CD4-positive, alpha-beta memory T cell (primary cell): ENCODE measurements at regions of chr10 and their contacts with region 1.

Region 1: DNA sequence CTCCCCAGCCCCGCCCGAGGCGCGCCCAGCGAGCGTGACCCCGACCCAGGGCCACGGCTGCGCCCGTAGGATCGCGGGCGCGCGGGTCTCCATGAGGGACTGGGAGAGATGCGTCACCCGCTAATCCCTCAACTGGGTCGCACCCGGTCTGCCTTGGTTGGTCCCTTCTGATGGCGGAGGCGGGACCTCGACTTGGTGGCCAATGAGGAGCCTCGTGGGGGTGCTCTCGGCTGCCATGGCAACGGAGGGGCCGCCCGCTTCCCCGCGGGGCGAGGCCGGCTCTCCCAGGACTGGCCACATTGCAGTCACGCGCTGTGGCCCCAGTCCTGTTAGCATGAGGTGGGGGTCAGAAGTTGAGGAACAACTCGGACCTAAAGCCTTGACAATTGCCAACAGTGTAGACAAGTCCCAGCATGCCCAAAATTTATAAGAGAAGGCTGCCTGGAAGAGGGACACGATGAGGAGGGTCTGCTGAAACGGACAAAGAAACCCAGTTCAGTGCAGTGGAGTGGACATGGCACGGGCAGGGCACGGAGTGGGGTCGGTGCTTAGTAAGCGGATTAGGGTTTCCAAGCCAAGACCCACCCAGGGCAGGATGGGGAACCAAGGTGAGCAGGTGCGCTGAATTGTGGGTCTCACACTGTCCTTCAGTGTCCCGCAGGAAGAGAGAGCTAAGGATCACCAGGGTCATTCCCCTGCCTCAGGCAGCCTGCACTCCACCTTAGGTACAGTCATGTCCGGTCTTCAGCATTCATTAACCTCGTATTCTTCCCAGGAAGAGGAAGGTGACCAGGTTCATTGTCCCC is 24.4 kb downstream of the DDIT4 start:
- DNase-seq: peak; percentile 89 to 95 (median 91)
- H3K4me3 ChIP-seq: peak overlapping the region in 1 of 2 donors; percentile 71
- H3K4me3 Mint-ChIP-seq: peak overlapping the region; percentile 29 to 94 (median 86)
- H3K27ac ChIP-seq: peak overlapping the region; percentile 95
- H3K27ac Mint-ChIP-seq: peak overlapping the region; percentile 96 to 100 (median 100)
- H3K4me1 ChIP-seq: peaks cover 56% of the 10 kb centered on the region
- H3K4me1 Mint-ChIP-seq: peaks cover 26 to 67% (median 46%) of the 10 kb centered on the region in 4 donors
- H3K27me3 ChIP-seq: no peaks in the 10 kb centered on the region
- H3K27me3 Mint-ChIP-seq: no peaks in the 10 kb centered on the region

Region 2: GRCh38 chr10:72285972-72286521 is 12.1 kb before region 1 on chr10:
- CTCF ChIA-PET with region 1: interaction called, 4 read pairs
- POLR2A ChIA-PET with region 1: interaction called, 24 read pairs
- intact Hi-C with region 1: loop called (anchors 1 kb)
- DNase-seq: no peak
- H3K4me3 ChIP-seq: no peak overlapping the region
- H3K4me3 Mint-ChIP-seq: peak overlapping the region in 3 of 8 donors; percentile 2 to 73 (median 11)
- H3K27ac ChIP-seq: no peak overlapping the region
- H3K27ac Mint-ChIP-seq: peak overlapping the region; percentile 19 to 92 (median 87)
- H3K4me1 ChIP-seq: peaks cover 31% of the 10 kb centered on the region
- H3K4me1 Mint-ChIP-seq: peaks cover 26 to 46% (median 37%) of the 10 kb centered on the region in 4 donors
- H3K27me3 ChIP-seq: no peaks in the 10 kb centered on the region
- H3K27me3 Mint-ChIP-seq: no peaks in the 10 kb centered on the region

Region 3: DNA sequence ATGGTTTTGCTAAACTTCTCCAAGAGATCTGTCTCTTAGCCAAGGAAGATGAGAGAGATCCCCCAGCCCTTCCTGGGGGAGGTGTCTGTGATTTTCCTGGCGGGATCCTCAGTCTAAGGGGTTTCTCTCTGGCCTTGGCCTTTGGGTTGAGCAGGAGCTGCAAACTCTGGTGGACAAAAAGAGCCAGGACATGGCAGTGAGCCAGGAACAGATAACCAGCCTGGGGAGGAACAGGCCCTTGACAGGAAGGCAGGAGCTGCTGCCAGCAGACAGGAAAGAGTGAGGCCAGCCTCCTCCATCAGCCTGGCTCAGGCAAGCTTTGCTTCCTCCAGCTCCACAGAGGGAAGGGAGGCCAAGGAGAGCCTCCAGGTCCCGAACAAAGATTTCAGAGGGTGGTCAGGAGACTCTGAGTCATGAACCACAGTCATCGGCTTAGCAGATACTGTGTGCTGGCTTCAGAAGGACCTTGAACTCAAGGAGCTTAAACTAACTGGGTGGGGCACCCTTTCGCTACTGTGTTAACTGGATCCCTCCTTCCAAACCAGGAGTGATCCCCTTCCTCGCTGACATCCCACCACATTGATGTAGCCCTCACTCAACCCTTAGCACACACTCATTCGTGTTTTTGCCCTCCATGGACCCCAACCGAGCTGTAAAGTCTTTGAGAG is 10.3 kb after region 1 on chr10:
- CTCF ChIA-PET with region 1: interaction called, 5 read pairs
- POLR2A ChIA-PET with region 1: interaction called, 368 read pairs
- intact Hi-C with region 1: no loop called
- DNase-seq: no peak
- H3K4me3 ChIP-seq: no peak overlapping the region
- H3K4me3 Mint-ChIP-seq: peak overlapping the region in 3 of 8 donors; percentile 7 to 21 (median 12)
- H3K27ac ChIP-seq: no peak overlapping the region
- H3K27ac Mint-ChIP-seq: peak overlapping the region; percentile 58 to 88 (median 67)
- H3K4me1 ChIP-seq: peaks cover 65% of the 10 kb centered on the region
- H3K4me1 Mint-ChIP-seq: peaks cover 34 to 67% (median 51%) of the 10 kb centered on the region in 4 donors
- H3K27me3 ChIP-seq: no peaks in the 10 kb centered on the region
- H3K27me3 Mint-ChIP-seq: no peaks in the 10 kb centered on the region

Region 4: DNA sequence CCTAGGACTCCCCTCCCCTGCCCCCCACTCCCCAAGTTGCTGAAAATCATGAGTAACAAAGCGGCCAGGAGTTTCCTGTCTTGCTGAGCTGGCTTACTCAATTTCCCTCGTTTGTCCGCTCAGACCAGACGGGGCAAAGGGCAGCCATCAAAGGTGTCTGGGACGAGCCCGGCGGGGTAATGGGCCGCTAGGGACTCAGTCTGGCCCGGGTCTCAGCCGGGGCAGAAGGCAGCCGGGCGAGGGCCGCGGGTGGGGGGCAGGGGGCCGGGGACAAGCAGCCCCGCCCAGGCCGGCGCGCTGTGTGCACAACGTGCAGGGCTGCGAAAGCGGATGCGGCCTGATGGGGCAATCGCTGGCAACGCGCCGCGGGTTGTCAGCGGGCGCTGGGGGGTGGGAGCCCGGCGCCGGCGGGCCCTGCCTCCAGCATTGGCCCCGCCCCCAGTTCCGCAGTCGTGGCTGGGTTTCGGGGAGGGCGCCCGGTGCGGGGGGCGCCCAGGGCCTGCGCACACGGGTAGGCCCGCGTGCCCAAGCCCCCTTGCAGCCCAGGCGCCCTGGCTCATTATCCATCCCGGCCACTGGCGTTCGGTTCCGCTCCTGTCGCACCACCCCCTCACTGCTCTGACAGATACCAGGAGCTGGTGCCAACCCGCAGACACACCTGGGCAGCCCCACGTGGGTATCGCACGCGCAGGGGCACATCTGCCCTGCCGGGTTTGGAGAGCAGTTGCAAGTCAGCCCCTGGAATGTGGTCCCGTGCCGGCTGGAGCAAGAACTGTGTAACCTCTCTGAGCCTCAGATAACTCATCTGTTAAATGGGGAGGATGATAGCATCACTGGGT is 21.5 kb after region 1 on chr10:
- CTCF ChIA-PET with region 1: interaction called, 10 read pairs
- POLR2A ChIA-PET with region 1: interaction called, 368 read pairs
- intact Hi-C with region 1: loop called (anchors 1 kb)
- DNase-seq: peak; percentile 87 to 91 (median 89)
- H3K4me3 ChIP-seq: peak overlapping the region; percentile 46 to 55
- H3K4me3 Mint-ChIP-seq: peak overlapping the region; percentile 79 to 89 (median 84)
- H3K27ac ChIP-seq: peak overlapping the region; percentile 89
- H3K27ac Mint-ChIP-seq: peak overlapping the region; percentile 96 to 99 (median 99)
- H3K4me1 ChIP-seq: peaks cover 95% of the 10 kb centered on the region
- H3K4me1 Mint-ChIP-seq: peaks cover 53 to 92% (median 74%) of the 10 kb centered on the region in 4 donors
- H3K27me3 ChIP-seq: no peaks in the 10 kb centered on the region
- H3K27me3 Mint-ChIP-seq: no peaks in the 10 kb centered on the region